Ovary (tissue), 10 donors: ENCODE measurements at regions of chr22 and their contacts with region 1.

Region 1: DNA sequence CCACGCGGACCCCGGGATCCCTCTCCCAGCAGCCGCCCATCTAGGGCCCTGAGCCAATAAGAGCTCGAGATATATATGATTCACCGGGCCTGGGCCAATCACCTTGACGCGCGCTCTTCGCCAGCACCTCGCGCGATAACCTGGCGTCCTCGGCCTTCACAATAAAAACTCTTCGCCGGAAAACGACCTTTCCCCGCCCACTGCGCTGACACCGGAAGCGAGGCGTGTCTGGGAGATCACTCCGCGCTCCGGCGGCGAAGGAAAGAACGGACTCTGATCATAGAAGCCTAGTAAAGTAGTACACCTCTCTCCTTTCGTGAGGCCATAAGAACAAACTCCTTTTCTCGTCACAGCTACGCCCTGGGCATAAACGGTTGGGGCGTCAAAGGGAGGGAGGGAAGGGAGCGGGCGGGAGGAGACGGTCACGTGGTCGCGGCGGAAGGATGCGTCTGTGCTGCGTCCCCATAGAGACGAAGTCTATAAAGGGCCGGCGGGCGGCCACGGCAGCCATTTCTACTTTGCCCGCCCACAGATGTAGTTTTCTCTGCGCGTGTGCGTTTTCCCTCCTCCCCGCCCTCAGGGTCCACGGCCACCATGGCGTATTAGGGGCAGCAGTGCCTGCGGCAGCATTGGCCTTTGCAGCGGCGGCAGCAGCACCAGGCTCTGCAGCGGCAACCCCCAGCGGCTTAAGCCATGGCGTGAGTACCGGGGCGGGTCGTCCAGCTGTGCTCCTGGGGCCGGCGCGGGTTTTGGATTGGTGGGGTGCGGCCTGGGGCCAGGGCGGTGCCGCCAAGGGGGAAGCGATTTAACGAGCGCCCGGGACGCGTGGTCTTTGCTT is at the start of gene ATF4:
- DNase-seq: peak; percentile 97 to 98 (median 98)
- H3K4me3 ChIP-seq: peak within 1 kb of the TSS; percentile 100
- H3K27ac ChIP-seq: peak within 1 kb of the TSS; percentile 86 to 95
- H3K4me1 ChIP-seq: peaks cover 13% of the 10 kb centered on the region
- H3K27me3 ChIP-seq: no peaks in the 10 kb centered on the region
- CTCF ChIP-seq: peak in 2 of 3 donors; percentile 14 to 35
- EP300 ChIP-seq: no peak
- POLR2A ChIP-seq: peak; percentile 99
- total RNA-seq, gene ATF4: 212 to 611 (median 246) TPM

Region 2: DNA sequence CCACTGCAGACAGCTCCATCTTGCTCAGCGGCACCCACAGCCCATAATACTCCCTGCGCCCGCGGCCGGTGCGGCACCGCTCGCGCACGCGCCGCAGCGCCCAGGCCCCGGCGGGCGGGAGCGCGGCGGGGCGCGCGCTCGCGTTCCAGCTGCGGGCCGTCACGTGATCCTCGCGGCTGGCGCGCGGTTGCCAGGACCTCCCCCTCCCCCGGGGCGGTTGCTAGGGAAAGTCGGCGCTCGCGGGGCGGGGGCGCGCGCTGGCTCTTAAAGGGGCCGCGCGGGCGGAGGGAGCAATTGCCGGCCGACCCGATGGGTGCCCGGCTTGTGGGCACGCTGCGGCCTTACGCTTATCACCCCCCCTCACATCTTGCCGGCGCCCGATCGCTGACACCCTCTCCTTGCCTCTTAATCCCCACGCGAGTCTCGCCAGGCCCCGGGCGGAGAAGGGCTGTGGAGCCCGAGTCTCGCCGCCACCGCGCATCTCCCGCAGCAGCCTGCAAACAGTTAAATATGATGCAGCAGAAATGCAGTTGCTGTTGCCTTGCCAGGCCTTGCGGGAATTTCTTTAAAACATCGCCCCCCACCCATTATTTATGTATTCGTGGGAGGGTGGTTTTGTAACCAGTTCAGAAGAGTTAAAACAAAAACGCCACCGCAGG is 648.0 kb before region 1 on chr22 and contains the start of gene CBX6:
- intact Hi-C with region 1: loop called in 1 of 4 experiments (anchors 10 kb)
- DNase-seq: peak; percentile 96 to 99 (median 98)
- H3K4me3 ChIP-seq: peak within 1 kb of the TSS; percentile 64
- H3K27ac ChIP-seq: peak within 1 kb of the TSS; percentile 95
- H3K4me1 ChIP-seq: peaks cover 3% of the 10 kb centered on the region
- H3K27me3 ChIP-seq: no peaks in the 10 kb centered on the region
- CTCF ChIP-seq: peak in 1 of 3 donors; percentile 10
- EP300 ChIP-seq: no peak
- POLR2A ChIP-seq: peak; percentile 43
- total RNA-seq, gene CBX6: 32.7 to 175 (median 120) TPM

Region 3: GRCh38 chr22:39319270-39320022 is 200.8 kb before region 1 on chr22 and contains the start of gene RPL3:
- intact Hi-C with region 1: loop called in 3 of 4 experiments (anchors 5 to 10 kb)
- DNase-seq: peak; percentile 95 to 99 (median 98)
- H3K4me3 ChIP-seq: peak within 1 kb of the TSS; percentile 83
- H3K27ac ChIP-seq: peak within 1 kb of the TSS; percentile 88 to 93
- H3K4me1 ChIP-seq: peaks cover 11% of the 10 kb centered on the region
- H3K27me3 ChIP-seq: no peaks in the 10 kb centered on the region
- CTCF ChIP-seq: peak in 2 of 3 donors; percentile 33 to 51
- EP300 ChIP-seq: peak; percentile 74
- POLR2A ChIP-seq: peak; percentile 92
- total RNA-seq, gene RPL3: 3,686 to 6,016 (median 4,727) TPM

Region 4: GRCh38 chr22:39405346-39406085 is 114.8 kb before region 1 on chr22:
- intact Hi-C with region 1: loop called in 2 of 4 experiments (anchors 10 kb)
- DNase-seq: peak; percentile 54 to 75 (median 64)
- H3K4me3 ChIP-seq: no peak overlapping the region
- H3K27ac ChIP-seq: peak overlapping the region in 1 of 2 donors; percentile 29
- H3K4me1 ChIP-seq: peaks cover 14% of the 10 kb centered on the region
- H3K27me3 ChIP-seq: no peaks in the 10 kb centered on the region
- CTCF ChIP-seq: peak in 1 of 3 donors; percentile 9
- EP300 ChIP-seq: no peak
- POLR2A ChIP-seq: no peak

Region 5: DNA sequence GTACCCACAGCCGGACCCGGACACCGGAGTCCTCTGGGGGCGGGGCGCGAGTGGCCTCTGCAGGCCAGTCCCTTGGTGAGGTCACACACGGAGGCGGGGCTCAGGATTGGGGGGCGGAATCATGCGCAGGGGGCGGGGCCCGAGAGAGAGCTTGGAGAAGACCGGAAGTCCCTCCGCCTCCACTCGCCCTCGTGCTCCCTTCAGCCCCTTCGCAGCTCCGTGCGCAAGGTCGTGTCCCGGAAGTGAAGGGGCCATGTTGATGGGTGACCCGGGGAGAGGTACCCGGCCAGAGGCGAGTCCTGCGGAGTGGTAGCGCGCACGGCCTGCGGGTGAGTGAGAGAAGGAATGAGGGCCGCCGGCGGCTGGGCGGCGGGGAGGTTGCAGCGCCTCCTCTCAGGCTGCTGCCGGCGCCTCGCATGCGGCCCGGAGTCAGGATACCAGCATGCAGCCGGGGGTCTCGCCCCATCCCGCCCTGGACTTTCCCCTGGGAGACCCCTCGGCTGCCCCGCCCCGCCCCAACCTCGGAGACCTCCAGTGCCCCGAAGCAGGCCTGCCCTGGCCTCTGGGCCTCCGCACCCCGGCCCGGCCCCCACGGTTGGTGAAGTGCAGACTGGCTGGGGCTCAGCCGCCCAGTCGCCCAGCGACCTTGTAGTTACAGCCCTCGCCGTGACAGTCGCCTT is 18.0 kb before region 1 on chr22 and contains the start of gene MIEF1:
- intact Hi-C with region 1: loop called in 2 of 4 experiments (anchors 2 kb)
- DNase-seq: peak; percentile 96 to 98 (median 98)
- H3K4me3 ChIP-seq: peak within 1 kb of the TSS; percentile 95
- H3K27ac ChIP-seq: peak within 1 kb of the TSS; percentile 69 to 91
- H3K4me1 ChIP-seq: peaks cover 15% of the 10 kb centered on the region
- H3K27me3 ChIP-seq: no peaks in the 10 kb centered on the region
- CTCF ChIP-seq: no peak
- EP300 ChIP-seq: no peak
- POLR2A ChIP-seq: peak; percentile 50
- total RNA-seq, gene MIEF1: 13.1 to 23.9 (median 19.9) TPM